Mammary epithelial cell (primary cell): ENCODE measurements at regions of chr16 and their contacts with region 1.

Region 1: GRCh38 chr16:68718590-68718989 is 18.5 kb upstream of the CDH1 start:
- DNase-seq: no peak
- H3K4me3 ChIP-seq: no peak overlapping the region
- H3K27ac ChIP-seq: no peak overlapping the region
- H3K4me1 ChIP-seq: peaks cover 6% of the 10 kb centered on the region
- H3K27me3 ChIP-seq: no peaks in the 10 kb centered on the region
- CTCF ChIP-seq: no peak

Region 2: DNA sequence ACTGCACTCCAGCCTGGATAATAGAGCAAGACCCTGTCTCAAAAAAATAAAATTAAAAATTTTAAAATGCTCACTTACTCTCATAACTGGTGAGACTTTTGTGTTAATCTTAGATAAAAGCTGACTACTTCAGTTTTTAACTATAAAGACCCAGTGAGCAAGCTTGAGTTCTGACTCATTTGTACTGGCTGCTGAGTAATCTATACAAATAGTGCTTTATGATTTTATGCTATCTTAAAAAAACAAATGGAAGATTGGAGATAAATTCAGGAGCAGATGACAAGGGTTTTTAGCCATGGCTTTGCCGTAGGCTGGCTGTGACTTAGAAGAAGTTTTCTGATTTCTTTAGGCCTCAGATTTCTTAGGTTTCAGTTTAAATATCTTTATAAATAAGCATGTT is 498.8 kb after region 1 on chr16:
- CTCF ChIA-PET with region 1: interaction called, 14 read pairs
- dilution Hi-C with region 1: no loop called
- in situ Hi-C with region 1: no loop called
- intact Hi-C with region 1: no loop called
- DNase-seq: peak; percentile 49
- H3K4me3 ChIP-seq: no peak overlapping the region
- H3K27ac ChIP-seq: peak overlapping the region; percentile 4
- H3K4me1 ChIP-seq: peaks cover 25% of the 10 kb centered on the region
- H3K27me3 ChIP-seq: no peaks in the 10 kb centered on the region
- CTCF ChIP-seq: no peak